ENCODE measurements at regions of chr1 and their contacts with region 1.

Region 1: DNA sequence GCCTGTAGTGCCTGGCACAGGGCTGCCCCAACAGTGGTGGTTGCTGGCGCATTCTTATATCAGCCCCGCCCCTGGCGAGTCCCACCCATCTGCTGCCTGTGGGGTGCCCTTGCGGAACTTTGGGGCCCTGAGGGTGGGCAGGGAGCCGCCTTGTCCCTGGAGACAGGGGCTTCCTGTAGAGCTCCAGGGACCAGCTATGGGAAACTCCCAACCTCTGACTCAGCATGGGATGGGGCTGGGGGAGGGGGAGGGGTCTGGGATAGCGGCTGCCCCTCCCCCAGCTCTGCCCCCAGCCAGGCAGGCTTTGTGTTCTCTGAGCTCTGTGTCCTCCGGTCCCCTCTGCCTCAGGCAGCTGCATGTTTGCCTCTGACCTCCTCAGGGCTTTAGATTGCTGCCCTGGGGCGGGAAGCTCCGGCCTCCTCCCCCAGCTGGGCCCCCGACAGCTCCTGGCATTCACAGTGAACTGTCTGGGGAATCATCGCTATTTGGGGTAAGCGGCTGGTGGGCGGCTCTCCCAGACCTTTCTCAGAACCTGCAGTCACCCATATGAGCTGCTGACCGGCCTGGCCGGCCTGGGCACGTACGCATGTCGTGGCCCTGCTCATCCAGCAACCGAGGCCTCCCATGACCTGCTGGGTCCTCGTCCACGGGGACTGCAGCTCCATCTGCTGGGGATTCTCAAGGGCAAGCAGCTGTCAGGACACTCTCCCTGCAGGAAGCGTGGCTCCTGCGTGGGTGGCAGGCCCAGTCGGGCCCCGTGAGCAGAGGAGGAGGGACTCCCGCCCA is 17.0 kb downstream of the ARHGEF16 start:
- DNase-seq: no peak
- H3K4me3 ChIP-seq: no peak overlapping the region
- H3K27ac ChIP-seq: no peak overlapping the region
- H3K4me1 ChIP-seq: peaks cover 0 to 6% (median 4%) of the 10 kb centered on the region in 4 donors
- H3K27me3 ChIP-seq: peaks cover 0 to 91% of the 10 kb centered on the region in 2 donors
- CTCF ChIP-seq: peak; percentile 10 to 18

Region 2: GRCh38 chr1:3198371-3199271 is 272.9 kb before region 1 on chr1:
- intact Hi-C with region 1: no loop called
- DNase-seq: no peak
- H3K4me3 ChIP-seq: no peak overlapping the region
- H3K27ac ChIP-seq: peak overlapping the region; percentile 91 to 98
- H3K4me1 ChIP-seq: peaks cover 0 to 91% (median 50%) of the 10 kb centered on the region in 4 donors
- H3K27me3 ChIP-seq: no peaks in the 10 kb centered on the region
- CTCF ChIP-seq: no peak

Region 3: DNA sequence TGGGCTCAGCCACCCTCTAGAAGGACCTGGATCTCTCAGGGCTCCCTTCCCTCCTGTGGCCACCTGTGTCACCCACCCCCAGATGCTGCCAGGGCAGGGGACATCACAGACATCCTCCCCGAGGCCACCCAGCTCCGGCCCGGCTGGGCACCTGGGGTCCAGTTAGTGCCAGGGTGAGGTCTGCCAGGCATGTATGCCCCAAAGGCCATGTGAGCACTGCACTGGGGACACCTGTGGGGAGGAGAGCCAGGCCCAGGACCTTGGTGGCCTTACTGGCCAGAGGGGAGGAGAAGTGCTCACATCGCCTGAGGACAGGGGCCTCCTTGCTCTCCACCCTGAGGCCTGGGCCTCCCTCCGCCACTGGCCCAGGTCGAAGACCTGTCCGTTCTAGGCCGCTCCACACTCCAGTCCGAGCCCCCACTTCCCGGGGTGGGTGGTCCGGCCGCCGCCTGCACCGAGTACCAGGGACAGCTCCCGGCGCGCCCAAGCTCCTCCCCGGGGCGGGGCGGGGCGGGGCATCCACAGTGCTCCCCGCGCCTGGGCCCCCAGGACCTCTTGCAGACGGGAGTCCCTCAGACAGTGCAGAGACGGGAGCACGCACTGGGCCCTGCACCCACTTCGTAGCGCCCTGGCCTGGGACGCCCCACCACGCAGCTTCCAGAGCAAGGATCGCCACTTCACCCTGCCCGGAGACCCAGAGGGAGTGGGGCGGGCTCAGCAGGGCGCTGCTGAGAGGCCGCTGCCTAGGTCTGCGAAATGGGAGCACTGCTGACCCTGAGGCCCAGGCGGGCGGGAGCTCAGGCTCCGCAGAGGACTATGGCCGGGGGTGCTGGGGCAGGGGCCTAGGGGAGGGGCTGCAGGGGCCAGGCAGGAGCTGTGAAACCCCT is 246.5 kb after region 1 on chr1:
- intact Hi-C with region 1: loop called (anchors 10 kb)
- DNase-seq: no peak
- H3K4me3 ChIP-seq: no peak overlapping the region
- H3K27ac ChIP-seq: no peak overlapping the region
- H3K4me1 ChIP-seq: peaks cover 0 to 4% (median 0%) of the 10 kb centered on the region in 4 donors
- H3K27me3 ChIP-seq: peaks cover 0 to 57% of the 10 kb centered on the region in 2 donors
- CTCF ChIP-seq: no peak